Endothelial cell of umbilical vein (primary cell): ENCODE measurements at regions of chr11 and their contacts with region 1.

Region 1: DNA sequence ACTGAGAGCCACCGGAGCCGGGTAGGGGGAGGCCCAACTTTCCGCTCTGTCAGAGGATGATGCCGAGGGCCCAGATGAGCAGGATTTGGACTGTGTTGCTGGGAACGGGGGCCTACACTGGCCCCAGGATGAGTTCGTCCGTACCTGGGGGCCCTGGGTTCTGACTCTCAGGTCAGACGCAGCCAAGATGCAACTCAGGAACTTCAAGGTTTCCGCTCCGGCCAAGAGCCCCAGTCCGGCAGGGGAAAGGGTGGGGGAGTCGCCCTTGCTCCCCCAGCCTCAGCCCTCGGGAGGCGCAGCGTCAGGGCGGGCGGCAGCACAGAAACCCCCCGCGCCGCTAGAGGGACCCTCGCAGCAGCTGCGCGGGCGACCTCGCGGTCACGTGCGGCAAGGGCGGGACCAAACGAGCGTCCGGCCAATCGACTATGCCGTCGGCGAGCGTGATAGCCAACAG is 241 bp upstream of the ARL2 start:
- DNase-seq: peak; percentile 92
- H3K4me3 ChIP-seq: peak overlapping the region; percentile 32 to 84 (median 59)
- H3K27ac ChIP-seq: peak overlapping the region; percentile 87
- H3K4me1 ChIP-seq: peaks cover 4% of the 10 kb centered on the region
- H3K27me3 ChIP-seq: no peaks in the 10 kb centered on the region
- CTCF ChIP-seq: peak in 1 of 2 donors; percentile 56
- POLR2A ChIP-seq: no peak

Region 2: GRCh38 chr11:64762674-64763525 is 250.8 kb before region 1 on chr11:
- CTCF ChIA-PET with region 1: no interaction called
- POLR2A ChIA-PET with region 1: no interaction called
- dilution Hi-C with region 1: no loop called
- intact Hi-C with region 1: no loop called
- DNase-seq: peak; percentile 66
- H3K4me3 ChIP-seq: no peak overlapping the region
- H3K27ac ChIP-seq: peak overlapping the region; percentile 1
- H3K4me1 ChIP-seq: peaks cover 20% of the 10 kb centered on the region
- H3K27me3 ChIP-seq: no peaks in the 10 kb centered on the region
- CTCF ChIP-seq: no peak
- POLR2A ChIP-seq: no peak

Region 3: GRCh38 chr11:64803163-64803845 is 210.4 kb before region 1 on chr11 and contains the start of gene MAP4K2:
- CTCF ChIA-PET with region 1: no interaction called
- POLR2A ChIA-PET with region 1: no interaction called
- dilution Hi-C with region 1: no loop called
- intact Hi-C with region 1: loop called (anchors 1 kb)
- DNase-seq: peak; percentile 74
- H3K4me3 ChIP-seq: peak within 1 kb of the TSS; percentile 59 to 87 (median 70)
- H3K27ac ChIP-seq: peak within 1 kb of the TSS; percentile 75
- H3K4me1 ChIP-seq: peaks cover 36% of the 10 kb centered on the region
- H3K27me3 ChIP-seq: no peaks in the 10 kb centered on the region
- CTCF ChIP-seq: peak; percentile 5 to 28
- POLR2A ChIP-seq: no peak
- total RNA-seq, gene MAP4K2: 43.3 and 48.5 TPM in 2 replicates

Region 4: GRCh38 chr11:64916775-64917662 is 96.7 kb before region 1 on chr11 and contains the start of gene ATG2A:
- CTCF ChIA-PET with region 1: interaction called, 8 read pairs
- POLR2A ChIA-PET with region 1: no interaction called
- dilution Hi-C with region 1: no loop called
- intact Hi-C with region 1: loop called (anchors 1 kb)
- DNase-seq: peak; percentile 100
- H3K4me3 ChIP-seq: peak within 1 kb of the TSS; percentile 10 to 86 (median 72)
- H3K27ac ChIP-seq: peak within 1 kb of the TSS; percentile 49
- H3K4me1 ChIP-seq: peaks cover 11% of the 10 kb centered on the region
- H3K27me3 ChIP-seq: no peaks in the 10 kb centered on the region
- CTCF ChIP-seq: no peak
- POLR2A ChIP-seq: peak; percentile 79
- total RNA-seq, gene ATG2A: 24.3 and 27.4 TPM in 2 replicates

Region 5: DNA sequence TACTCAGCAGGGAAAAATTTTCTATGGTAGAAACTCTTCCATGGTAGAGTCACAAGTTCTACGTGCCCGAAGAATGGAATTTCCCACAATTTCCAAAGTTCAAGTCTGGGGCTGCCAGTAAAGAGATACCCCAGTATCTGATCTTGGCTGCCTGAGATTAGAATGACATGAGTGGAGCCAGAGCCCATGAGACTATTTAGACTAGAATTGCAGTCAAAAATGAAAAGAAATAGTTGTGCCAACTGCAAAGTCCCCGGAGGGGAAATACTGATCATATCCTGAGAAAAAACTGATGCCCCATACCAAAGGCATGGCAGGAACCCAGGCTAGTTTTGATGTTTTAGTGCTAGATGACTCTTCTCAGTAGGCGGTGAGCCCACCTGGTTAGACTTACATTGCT is 53.0 kb before region 1 on chr11:
- CTCF ChIA-PET with region 1: no interaction called
- POLR2A ChIA-PET with region 1: no interaction called
- dilution Hi-C with region 1: no loop called
- intact Hi-C with region 1: no loop called
- DNase-seq: no peak
- H3K4me3 ChIP-seq: no peak overlapping the region
- H3K27ac ChIP-seq: no peak overlapping the region
- H3K4me1 ChIP-seq: no peaks in the 10 kb centered on the region
- H3K27me3 ChIP-seq: peaks cover 4 to 10% of the 10 kb centered on the region in 2 experiments
- CTCF ChIP-seq: no peak
- POLR2A ChIP-seq: no peak

Region 6: GRCh38 chr11:64996710-64997380 is 16.9 kb before region 1 on chr11 and contains the start of gene BATF2:
- CTCF ChIA-PET with region 1: interaction called, 40 read pairs
- POLR2A ChIA-PET with region 1: interaction called, 3 read pairs
- dilution Hi-C with region 1: no loop called
- intact Hi-C with region 1: no loop called
- DNase-seq: peak; percentile 73
- H3K4me3 ChIP-seq: peak within 1 kb of the TSS in 1 of 3 experiments; percentile 14
- H3K27ac ChIP-seq: no peak within 1 kb of the TSS
- H3K4me1 ChIP-seq: no peaks in the 10 kb centered on the region
- H3K27me3 ChIP-seq: no peaks in the 10 kb centered on the region
- CTCF ChIP-seq: peak; percentile 39 to 65
- POLR2A ChIP-seq: no peak
- total RNA-seq, gene BATF2: 0.75 and 0.81 TPM in 2 replicates

Region 7: GRCh38 chr11:65060913-65061408 is 47.2 kb after region 1 on chr11:
- CTCF ChIA-PET with region 1: no interaction called
- POLR2A ChIA-PET with region 1: no interaction called
- dilution Hi-C with region 1: no loop called
- intact Hi-C with region 1: loop called (anchors 2 kb)
- DNase-seq: peak; percentile 28
- H3K4me3 ChIP-seq: no peak overlapping the region
- H3K27ac ChIP-seq: no peak overlapping the region
- H3K4me1 ChIP-seq: no peaks in the 10 kb centered on the region
- H3K27me3 ChIP-seq: no peaks in the 10 kb centered on the region
- CTCF ChIP-seq: peak; percentile 40 to 50
- POLR2A ChIP-seq: no peak

Region 8: DNA sequence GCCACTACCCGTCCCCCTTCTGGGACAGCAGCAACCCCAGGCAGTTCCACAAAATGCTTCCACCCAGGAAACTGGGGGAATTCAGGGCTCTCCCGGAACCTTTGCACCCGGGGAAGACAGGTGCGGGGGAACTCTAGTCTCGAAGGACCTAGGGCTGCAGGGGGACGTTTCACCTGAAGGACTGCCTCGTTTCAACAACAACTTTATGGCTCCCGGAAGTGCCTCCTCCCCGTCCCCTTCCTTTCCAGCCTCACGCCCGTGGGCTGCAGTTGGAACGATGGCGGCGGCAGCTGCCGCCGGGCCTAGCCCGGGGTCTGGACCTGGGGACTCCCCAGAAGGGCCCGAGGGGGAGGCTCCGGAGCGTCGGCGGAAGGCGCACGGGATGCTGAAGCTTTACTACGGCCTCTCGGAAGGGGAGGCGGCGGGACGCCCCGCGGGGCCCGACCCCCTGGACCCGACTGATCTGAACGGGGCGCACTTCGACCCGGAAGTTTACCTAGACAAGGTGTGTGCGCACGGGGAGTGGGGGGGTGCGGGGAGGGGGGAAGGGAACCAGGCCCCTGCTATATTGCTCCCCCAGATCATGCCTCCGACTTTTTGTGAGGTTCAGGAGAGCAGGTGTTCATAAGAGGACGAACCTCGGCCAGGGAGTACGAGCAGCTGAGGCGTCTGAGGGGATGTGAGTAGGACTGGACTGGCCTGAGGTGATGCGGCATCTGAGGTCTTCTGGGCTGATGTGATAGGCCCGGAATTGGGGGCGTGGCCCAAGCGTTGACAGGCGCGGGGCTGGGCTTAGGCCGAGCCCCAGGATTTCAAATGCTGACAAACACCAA is 82.5 kb after region 1 on chr11 and contains the start of gene VPS51:
- CTCF ChIA-PET with region 1: no interaction called
- POLR2A ChIA-PET with region 1: no interaction called
- dilution Hi-C with region 1: no loop called
- intact Hi-C with region 1: loop called (anchors 5 kb)
- DNase-seq: peak; percentile 76
- H3K4me3 ChIP-seq: peak within 1 kb of the TSS; percentile 55 to 62 (median 56)
- H3K27ac ChIP-seq: peak within 1 kb of the TSS; percentile 46
- H3K4me1 ChIP-seq: peaks cover 6% of the 10 kb centered on the region
- H3K27me3 ChIP-seq: no peaks in the 10 kb centered on the region
- CTCF ChIP-seq: no peak
- POLR2A ChIP-seq: peak; percentile 94
- total RNA-seq, gene VPS51: 102 and 108 TPM in 2 replicates